ENCODE measurements at regions of chr22 and their contacts with region 1.

Region 1: GRCh38 chr22:44684506-44685383 is 17.3 kb upstream of the PRR5 start:
- DNase-seq: peak; percentile 92
- ATAC-seq: peak; percentile 89
- H3K4me3 Mint-ChIP-seq: peak overlapping the region; percentile 48
- H3K27ac Mint-ChIP-seq: peak overlapping the region; percentile 86
- H3K4me1 Mint-ChIP-seq: peaks cover 67% of the 10 kb centered on the region
- H3K27me3 Mint-ChIP-seq: no peaks in the 10 kb centered on the region

Region 2: DNA sequence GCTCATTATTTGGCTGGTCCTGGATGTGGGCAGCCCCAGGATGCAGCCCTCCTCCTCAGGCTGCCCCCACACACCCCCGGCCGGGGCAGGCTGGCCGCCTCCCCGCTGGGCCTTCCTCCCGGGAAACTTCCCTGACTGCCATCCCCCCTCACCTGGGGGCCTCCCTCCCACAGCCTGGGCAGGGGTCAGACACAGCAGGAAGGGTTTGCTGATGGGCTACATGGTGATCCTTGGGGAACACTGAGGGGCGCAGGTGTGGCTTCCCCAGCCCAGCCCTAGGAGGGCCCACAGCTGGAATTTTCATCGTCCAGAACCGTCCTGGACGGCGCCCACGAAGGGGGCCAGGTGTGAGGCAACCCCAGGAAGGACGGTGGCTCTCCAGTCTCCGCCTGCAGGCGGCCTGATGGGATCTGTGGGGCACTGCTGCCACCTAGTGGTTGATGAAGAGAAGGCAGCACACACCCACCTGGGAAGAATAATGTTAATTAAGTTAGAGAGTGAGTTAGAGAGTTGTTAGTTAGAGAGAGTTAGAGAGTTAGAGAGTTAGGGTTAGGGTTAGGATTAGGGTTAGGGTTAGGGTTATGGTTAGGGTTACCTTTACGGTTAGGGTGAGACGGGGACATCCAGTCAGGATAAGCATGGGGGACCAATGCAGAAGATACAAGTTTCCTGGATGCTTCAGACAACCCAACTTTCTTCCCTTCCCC is 58.6 kb before region 1 on chr22:
- CTCF ChIA-PET with region 1: interaction called, 12 read pairs
- POLR2A ChIA-PET with region 1: no interaction called
- DNase-seq: peak; percentile 88
- ATAC-seq: peak; percentile 66
- H3K4me3 Mint-ChIP-seq: no peak overlapping the region
- H3K27ac Mint-ChIP-seq: peak overlapping the region; percentile 16
- H3K4me1 Mint-ChIP-seq: peaks cover 7% of the 10 kb centered on the region
- H3K27me3 Mint-ChIP-seq: peaks cover 4% of the 10 kb centered on the region

Region 3: DNA sequence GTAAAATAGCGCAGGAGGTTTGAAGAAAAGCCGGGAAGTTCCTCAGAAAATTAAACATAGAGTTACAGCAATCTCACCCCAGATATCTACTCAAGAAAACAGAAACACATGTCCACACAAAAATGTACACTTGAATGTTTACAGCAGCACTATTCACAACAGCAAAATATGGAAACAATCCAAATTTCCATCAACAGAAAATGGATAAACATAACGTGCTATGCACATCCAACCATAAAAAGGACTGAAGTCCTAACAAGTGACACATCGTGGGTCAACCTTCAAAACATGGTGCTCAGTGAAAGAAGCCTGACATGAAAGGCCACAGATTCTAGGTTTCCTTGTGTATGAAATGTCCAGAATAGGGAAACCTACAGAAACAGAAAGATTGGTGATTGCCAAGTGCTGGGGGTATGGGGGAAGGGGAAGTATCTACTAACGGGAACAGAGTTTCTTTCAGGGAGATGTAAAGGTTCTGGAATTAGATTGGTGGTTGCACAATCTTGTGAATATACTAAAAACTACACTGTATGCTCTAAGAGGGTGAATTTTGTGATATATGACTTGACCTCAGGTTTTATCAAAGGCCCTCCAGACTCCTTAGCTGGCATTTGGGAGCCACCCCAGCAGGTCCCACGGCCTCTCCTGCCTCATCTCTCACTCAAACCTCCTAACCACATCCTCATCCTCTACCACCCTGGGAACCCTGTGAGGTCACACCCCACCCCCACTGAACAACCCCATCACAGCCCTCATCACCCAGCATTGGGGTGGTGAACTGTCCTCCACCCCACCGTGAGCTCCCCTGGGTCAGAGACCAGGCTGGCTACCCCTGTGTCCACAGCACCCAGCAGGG is 52.0 kb before region 1 on chr22:
- CTCF ChIA-PET with region 1: interaction called, 12 read pairs
- POLR2A ChIA-PET with region 1: no interaction called
- DNase-seq: peak; percentile 63
- ATAC-seq: peak; percentile 68
- H3K4me3 Mint-ChIP-seq: no peak overlapping the region
- H3K27ac Mint-ChIP-seq: no peak overlapping the region
- H3K4me1 Mint-ChIP-seq: peaks cover 2% of the 10 kb centered on the region
- H3K27me3 Mint-ChIP-seq: peaks cover 13% of the 10 kb centered on the region

Region 4: DNA sequence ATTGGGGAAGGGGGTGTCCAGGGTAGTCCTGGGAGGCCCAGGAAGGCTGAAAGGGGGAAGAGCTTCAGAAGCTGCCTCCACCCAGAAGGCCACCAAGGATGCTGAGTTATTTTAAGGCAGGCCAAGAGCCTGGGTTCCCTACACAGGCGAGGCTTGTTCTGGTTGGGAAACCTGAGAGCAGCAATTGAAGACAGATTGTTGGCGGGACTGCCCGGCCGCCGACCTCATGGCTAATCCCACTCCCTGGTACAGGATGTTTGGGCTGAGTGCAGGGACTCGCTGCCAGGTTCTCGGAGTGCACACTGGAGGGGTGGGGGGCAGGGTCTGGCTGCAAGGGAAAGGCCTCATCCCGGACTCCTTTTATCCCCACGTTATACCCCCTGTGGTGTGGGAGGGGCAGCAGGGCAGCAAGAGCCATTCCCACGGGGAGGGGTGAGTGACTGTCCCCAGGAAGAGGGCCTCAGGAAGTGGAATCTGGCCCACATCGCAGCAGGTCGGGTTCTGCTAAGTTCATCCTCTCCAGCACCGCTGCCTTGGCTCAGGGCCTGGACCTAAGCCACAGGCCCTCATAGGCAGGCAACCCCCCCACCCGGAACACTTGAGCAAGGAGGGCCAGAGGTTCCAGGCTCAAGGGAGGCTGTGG is 26.3 kb before region 1 on chr22:
- CTCF ChIA-PET with region 1: interaction called, 129 read pairs
- POLR2A ChIA-PET with region 1: interaction called, 4 read pairs
- DNase-seq: no peak
- ATAC-seq: peak; percentile 54
- H3K4me3 Mint-ChIP-seq: no peak overlapping the region
- H3K27ac Mint-ChIP-seq: no peak overlapping the region
- H3K4me1 Mint-ChIP-seq: peaks cover 43% of the 10 kb centered on the region
- H3K27me3 Mint-ChIP-seq: no peaks in the 10 kb centered on the region

Region 5: DNA sequence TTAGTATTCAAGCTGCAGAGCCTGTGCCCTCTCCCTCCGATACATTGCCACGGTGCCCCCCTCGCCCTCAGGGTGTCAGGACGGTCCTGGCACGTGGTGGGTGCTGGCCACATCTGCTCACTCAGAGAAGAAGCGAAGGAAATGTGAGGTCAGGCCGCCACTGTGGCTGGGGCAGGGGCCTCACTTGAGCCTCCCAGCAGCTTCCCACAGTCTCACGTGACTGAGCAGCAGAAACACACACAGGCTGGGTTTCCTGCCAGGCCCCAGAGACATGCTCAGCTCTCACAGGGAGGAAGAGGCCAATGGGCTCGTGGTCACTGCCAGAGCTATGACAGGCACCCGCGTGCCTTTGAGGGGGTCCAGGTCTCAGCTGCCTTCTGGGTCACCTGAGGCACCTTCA is 20.6 kb before region 1 on chr22:
- CTCF ChIA-PET with region 1: interaction called, 129 read pairs
- POLR2A ChIA-PET with region 1: interaction called, 4 read pairs
- DNase-seq: peak; percentile 87
- ATAC-seq: peak; percentile 53
- H3K4me3 Mint-ChIP-seq: peak overlapping the region; percentile 43
- H3K27ac Mint-ChIP-seq: peak overlapping the region; percentile 87
- H3K4me1 Mint-ChIP-seq: peaks cover 74% of the 10 kb centered on the region
- H3K27me3 Mint-ChIP-seq: no peaks in the 10 kb centered on the region

Region 6: GRCh38 chr22:44701824-44702478 is 17.2 kb after region 1 on chr22 and contains the start of gene PRR5:
- CTCF ChIA-PET with region 1: interaction called, 14 read pairs
- POLR2A ChIA-PET with region 1: no interaction called
- DNase-seq: peak; percentile 91
- ATAC-seq: peak; percentile 90
- H3K4me3 Mint-ChIP-seq: peak within 1 kb of the TSS; percentile 69
- H3K27ac Mint-ChIP-seq: peak within 1 kb of the TSS; percentile 83
- H3K4me1 Mint-ChIP-seq: peaks cover 32% of the 10 kb centered on the region
- H3K27me3 Mint-ChIP-seq: no peaks in the 10 kb centered on the region
- total RNA-seq, gene PRR5: 29.4 to 31.5 TPM

Measured in activated CD8-positive, alpha-beta T cell treated with anti-CD3 and anti-CD28 coated beads, Interleukin-2, amount 10 ng/mL, durations not matched to agents 7 days and 5 days (primary cell).